K562 (cell line): ENCODE measurements at regions of chr15 and their contacts with region 1.

Region 1: DNA sequence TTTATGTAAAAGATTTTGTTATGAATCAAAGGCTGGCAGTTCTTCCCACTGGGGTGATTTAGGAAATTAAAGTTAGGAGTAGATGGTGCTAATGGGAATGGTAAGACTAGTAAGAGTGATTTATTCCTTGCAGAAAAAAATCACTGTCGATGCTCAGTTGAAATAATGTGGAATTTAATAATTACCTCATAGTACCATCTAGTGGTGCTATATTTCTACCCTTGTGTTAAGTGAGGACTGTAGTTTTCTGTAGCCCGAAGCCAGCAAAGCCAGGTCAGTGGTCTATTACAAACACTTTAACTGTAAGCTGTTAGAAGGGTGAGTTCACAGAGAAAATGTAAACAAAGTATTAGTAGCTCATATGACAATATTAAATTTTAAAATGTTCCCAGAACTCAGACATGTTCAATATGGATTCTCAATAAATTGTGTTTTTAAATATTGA is 39.5 kb upstream of the GOLGA8J start:
- DNase-seq: no peak
- ATAC-seq: no peak
- H3K4me3 ChIP-seq: no peak overlapping the region
- H3K27ac ChIP-seq: no peak overlapping the region
- H3K4me1 ChIP-seq: no peaks in the 10 kb centered on the region
- H3K27me3 ChIP-seq: peaks cover 0 to 4% of the 10 kb centered on the region in 2 experiments; a peak in 3 of 5 replicates
- CTCF ChIP-seq: peak in 1 of 3 experiments; percentile 20; a peak in 1 of 6 replicates
- EP300 ChIP-seq: no peak
- POLR2A ChIP-seq: no peak
- RAD21 ChIP-seq: no peak

Region 2: DNA sequence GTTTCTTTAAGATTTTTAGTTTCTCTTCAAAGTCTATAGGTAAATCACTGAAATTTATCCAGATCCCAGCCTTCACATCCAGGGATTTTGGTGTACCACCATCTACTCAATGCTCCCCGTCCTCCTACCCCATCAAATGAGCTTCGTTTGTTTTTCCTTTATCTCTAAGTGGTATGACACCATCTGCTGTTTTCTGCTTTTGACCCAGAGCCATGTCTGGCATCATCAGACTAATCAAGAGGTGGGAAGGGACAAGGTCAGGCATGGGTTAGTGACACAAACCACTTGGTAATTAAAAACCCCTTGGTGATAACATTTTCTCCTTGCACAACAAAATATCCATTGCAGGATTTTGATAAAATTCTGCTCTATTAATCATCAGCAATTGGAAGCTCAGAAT is 53.2 kb before region 1 on chr15:
- CTCF ChIA-PET with region 1: no interaction called
- POLR2A ChIA-PET with region 1: no interaction called
- in situ Hi-C with region 1: no loop called
- intact Hi-C with region 1: loop called (anchors 10 kb)
- DNase-seq: no peak
- ATAC-seq: no peak
- H3K4me3 ChIP-seq: no peak overlapping the region
- H3K27ac ChIP-seq: no peak overlapping the region
- H3K4me1 ChIP-seq: no peaks in the 10 kb centered on the region
- H3K27me3 ChIP-seq: peaks cover 6 to 9% of the 10 kb centered on the region in 2 experiments; a peak in 4 of 5 replicates
- CTCF ChIP-seq: no peak
- EP300 ChIP-seq: no peak
- POLR2A ChIP-seq: no peak
- RAD21 ChIP-seq: no peak

Region 3: GRCh38 chr15:30030350-30030749 is 12.9 kb before region 1 on chr15:
- CTCF ChIA-PET with region 1: no interaction called
- POLR2A ChIA-PET with region 1: no interaction called
- in situ Hi-C with region 1: no loop called
- intact Hi-C with region 1: no loop called
- DNase-seq: peak in 1 of 4 experiments; percentile 3
- ATAC-seq: no peak
- H3K4me3 ChIP-seq: no peak overlapping the region
- H3K27ac ChIP-seq: no peak overlapping the region
- H3K4me1 ChIP-seq: no peaks in the 10 kb centered on the region
- H3K27me3 ChIP-seq: no peaks in the 10 kb centered on the region; a peak in 2 of 5 replicates
- CTCF ChIP-seq: peak in 1 of 3 experiments; percentile 39; a peak in 2 of 6 replicates
- EP300 ChIP-seq: no peak
- POLR2A ChIP-seq: no peak
- RAD21 ChIP-seq: peak in 1 of 2 experiments; percentile 24; a peak in 2 of 4 replicates